Psoas muscle (tissue), 8 donors: ENCODE measurements at regions of chr2 and their contacts with region 1.

Region 1: DNA sequence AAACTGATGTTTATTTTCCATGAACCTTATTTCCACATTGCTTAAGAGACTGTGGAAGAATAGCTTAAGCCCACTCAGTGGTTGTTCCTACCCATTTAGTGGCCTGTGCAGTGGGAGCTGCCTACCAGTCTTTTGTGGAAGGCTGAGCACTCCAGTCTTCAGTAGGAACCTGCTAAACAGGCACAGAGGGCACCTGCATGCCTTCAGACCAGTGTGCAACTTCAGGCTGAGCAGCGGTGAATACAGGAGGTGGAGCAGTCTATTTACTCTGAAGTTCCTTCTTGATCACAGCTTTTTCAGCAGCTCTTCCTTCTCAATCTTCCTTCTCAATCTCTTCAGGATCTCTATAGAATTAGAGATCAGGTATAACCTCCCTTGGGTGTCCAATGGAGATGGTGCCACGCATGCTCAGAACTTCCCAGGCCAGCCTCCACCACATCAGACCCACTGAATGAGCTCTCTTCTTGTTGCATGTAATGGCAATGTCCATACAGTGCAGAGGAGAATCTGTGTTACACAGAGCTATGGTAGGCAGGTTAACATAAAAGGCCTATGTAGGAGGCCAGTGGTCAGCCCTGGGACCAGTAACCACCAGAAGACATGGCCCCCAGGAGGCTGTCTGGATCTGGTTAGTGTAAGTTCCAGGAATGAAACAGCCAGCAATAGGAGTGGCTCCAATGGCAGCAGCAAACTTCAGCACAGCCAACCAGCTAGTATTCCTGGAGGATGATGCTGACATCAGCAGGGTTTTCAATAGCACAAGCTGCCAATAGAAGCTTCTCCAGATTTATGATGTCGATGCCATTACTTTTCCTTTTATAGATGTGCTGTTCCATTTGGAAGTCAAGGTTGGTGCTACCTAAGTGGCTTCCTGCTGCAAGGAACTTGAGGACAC is 47.9 kb upstream of the MAT2A start:
- DNase-seq: no peak
- ATAC-seq: no peak
- H3K4me3 ChIP-seq: no peak overlapping the region
- H3K27ac ChIP-seq: no peak overlapping the region
- H3K4me1 ChIP-seq: no peaks in the 10 kb centered on the region
- H3K27me3 ChIP-seq: no peaks in the 10 kb centered on the region
- CTCF ChIP-seq: no peak

Region 2: GRCh38 chr2:85445316-85446295 is 45.5 kb before region 1 on chr2:
- intact Hi-C with region 1: loop called (anchors 2 to 5 kb)
- DNase-seq: peak; percentile 63 to 75
- ATAC-seq: peak; percentile 49 to 68 (median 58)
- H3K4me3 ChIP-seq: no peak overlapping the region
- H3K27ac ChIP-seq: peak overlapping the region; percentile 36
- H3K4me1 ChIP-seq: no peaks in the 10 kb centered on the region
- H3K27me3 ChIP-seq: no peaks in the 10 kb centered on the region
- CTCF ChIP-seq: no peak